HepG2 (cell line): ENCODE measurements at regions of chr6 and their contacts with region 1.

Region 1: GRCh38 chr6:42118162-42119001 is 24.0 kb downstream of the C6orf132 start:
- DNase-seq: peak; percentile 83
- ATAC-seq: peak; percentile 91
- H3K4me3 ChIP-seq: peak overlapping the region in 1 of 3 experiments; percentile 42; a peak in 2 of 6 replicates
- H3K27ac ChIP-seq: peak overlapping the region; percentile 57
- H3K4me1 ChIP-seq: peaks cover 46% of the 10 kb centered on the region
- H3K27me3 ChIP-seq: no peaks in the 10 kb centered on the region
- CTCF ChIP-seq: 0 out of 2 replicates have a peak, but pooled peaks have one; percentile 32
- EP300 ChIP-seq: peak in 1 of 2 experiments; percentile 37; a peak in 1 of 4 replicates
- POLR2A ChIP-seq: no peak
- RAD21 ChIP-seq: 0 out of 2 replicates have a peak, but pooled peaks have one; percentile 20

Region 2: DNA sequence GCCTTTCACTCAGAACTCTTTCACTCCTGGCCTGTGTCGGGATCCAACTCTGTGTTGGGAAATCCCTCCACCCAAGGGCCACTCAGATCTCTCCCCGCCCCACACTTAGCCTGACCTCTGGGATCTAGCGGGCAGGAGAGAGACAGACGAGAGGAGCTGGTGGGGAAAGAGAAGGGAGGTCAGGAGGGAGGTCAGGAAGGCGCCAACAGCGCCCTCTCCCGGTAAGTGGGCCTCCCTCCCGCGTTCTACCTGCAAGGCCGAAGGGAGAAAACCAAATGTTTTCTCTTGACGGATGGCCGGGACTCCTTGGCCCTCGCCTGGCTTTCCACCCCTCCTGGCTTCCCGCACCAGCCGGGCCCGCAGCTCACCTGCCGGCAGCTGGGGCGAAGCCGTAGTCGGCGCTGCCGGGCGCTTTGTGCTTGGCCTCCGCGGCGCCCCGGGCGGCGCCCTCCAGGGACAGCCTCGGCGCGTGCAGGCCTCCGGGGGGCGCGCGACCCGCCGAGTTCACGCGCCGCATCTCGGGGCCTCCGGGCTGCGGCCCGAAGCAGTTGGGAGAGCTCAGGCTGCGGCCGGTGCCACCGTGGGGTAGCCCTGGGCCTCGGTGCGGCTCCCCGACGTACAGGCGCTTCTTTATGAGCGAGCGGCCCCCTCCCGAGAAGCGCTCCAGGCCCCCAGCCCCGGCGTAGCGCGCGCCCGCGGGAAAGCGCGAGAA is 14.1 kb before region 1 on chr6:
- CTCF ChIA-PET with region 1: interaction called, 3 read pairs
- POLR2A ChIA-PET with region 1: interaction called, 34 read pairs
- in situ Hi-C with region 1: no loop called
- intact Hi-C with region 1: loop called (anchors 2 kb)
- DNase-seq: peak; percentile 61
- ATAC-seq: peak; percentile 36
- H3K4me3 ChIP-seq: peak overlapping the region in 1 of 3 experiments; percentile 35; a peak in 2 of 6 replicates
- H3K27ac ChIP-seq: no peak overlapping the region
- H3K4me1 ChIP-seq: peaks cover 77% of the 10 kb centered on the region
- H3K27me3 ChIP-seq: no peaks in the 10 kb centered on the region
- CTCF ChIP-seq: peak; percentile 76
- EP300 ChIP-seq: no peak
- POLR2A ChIP-seq: no peak
- RAD21 ChIP-seq: peak; percentile 64